ENCODE measurements at regions of chr13 and their contacts with region 1.

Region 1: DNA sequence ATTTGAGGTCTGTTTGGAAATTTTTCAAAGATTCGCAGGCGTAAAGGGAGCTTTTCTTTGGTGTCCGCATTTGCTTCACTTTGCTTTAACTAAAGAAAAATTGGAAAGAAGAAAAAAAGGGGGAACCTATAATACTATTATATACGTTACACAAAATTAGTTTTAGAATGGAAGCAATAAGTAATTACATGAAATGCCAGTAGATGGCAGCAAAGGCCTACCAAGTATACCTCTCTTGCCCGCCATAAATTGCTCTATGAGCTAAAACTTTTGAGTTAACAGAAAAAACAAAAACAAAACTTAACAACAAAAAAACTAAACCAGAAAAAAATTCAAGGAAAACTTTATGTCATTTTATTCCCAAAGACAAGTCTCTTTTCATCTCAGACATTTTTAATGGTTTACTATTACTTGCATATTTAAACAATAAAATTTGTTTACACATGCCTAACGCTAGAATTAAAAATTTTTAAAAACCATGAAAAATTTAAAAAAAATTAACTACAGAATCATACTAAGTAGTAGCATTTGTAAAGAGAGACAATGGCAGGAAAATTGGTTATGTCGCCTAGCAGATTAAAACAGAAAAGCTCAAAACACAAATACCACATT is 271.4 kb downstream of the NALCN start:
- DNase-seq: peak; percentile 5
- ATAC-seq: peak; percentile 80
- H3K4me3 ChIP-seq: no peak overlapping the region
- H3K27ac ChIP-seq: no peak overlapping the region
- H3K4me1 ChIP-seq: no peaks in the 10 kb centered on the region
- H3K27me3 ChIP-seq: no peaks in the 10 kb centered on the region; a peak in 1 of 4 replicates
- CTCF ChIP-seq: peak; percentile 50 to 74 (median 51); a peak in 5 of 6 replicates
- EP300 ChIP-seq: no peak
- POLR2A ChIP-seq: no peak
- RAD21 ChIP-seq: peak; percentile 73

Region 2: GRCh38 chr13:101155920-101156319 is 11.0 kb after region 1 on chr13:
- CTCF ChIA-PET with region 1: interaction called, 27 read pairs
- POLR2A ChIA-PET with region 1: no interaction called
- RAD21 ChIA-PET with region 1: interaction called, 3 read pairs
- SMC1A ChIA-PET with region 1: interaction called, 17 read pairs
- in situ Hi-C with region 1: no loop called
- intact Hi-C with region 1: no loop called
- DNase-seq: no peak
- ATAC-seq: peak; percentile 53; the same call in 2 of the 3 replicates
- H3K4me3 ChIP-seq: no peak overlapping the region
- H3K27ac ChIP-seq: no peak overlapping the region
- H3K4me1 ChIP-seq: no peaks in the 10 kb centered on the region
- H3K27me3 ChIP-seq: 0 out of 4 replicates have a peak, but pooled peaks cover 0 to 2% of the 10 kb centered on the region in 2 experiments
- CTCF ChIP-seq: peak; percentile 25 to 57 (median 54); a peak in 5 of 6 replicates
- EP300 ChIP-seq: no peak
- POLR2A ChIP-seq: no peak
- RAD21 ChIP-seq: no peak

Region 3: DNA sequence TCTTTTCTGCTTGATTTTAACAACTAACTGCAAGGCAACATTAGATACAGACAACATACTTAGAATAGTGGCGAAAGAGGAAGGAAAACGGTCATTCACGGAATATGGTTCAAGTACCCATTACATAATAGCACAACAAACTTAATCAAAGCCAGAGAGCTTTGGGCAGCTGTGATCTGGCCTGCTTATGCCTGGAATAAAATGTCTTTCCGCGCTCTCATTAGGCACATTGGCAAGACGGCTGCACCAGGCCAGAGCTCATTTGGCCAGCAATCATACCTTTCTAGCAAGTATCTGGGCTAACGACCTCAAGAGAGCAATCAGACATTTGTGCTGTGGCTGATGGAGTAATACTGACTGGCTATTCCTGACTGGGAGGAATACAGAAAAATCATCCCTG is 158.6 kb after region 1 on chr13:
- CTCF ChIA-PET with region 1: interaction called, 40 read pairs
- POLR2A ChIA-PET with region 1: no interaction called
- RAD21 ChIA-PET with region 1: interaction called, 32 read pairs
- SMC1A ChIA-PET with region 1: interaction called, 31 read pairs
- in situ Hi-C with region 1: no loop called
- intact Hi-C with region 1: loop called (anchors 5 kb)
- DNase-seq: no peak
- ATAC-seq: no peak
- H3K4me3 ChIP-seq: no peak overlapping the region
- H3K27ac ChIP-seq: no peak overlapping the region
- H3K4me1 ChIP-seq: no peaks in the 10 kb centered on the region
- H3K27me3 ChIP-seq: no peaks in the 10 kb centered on the region
- CTCF ChIP-seq: no peak
- EP300 ChIP-seq: no peak
- POLR2A ChIP-seq: no peak
- RAD21 ChIP-seq: no peak

Region 4: DNA sequence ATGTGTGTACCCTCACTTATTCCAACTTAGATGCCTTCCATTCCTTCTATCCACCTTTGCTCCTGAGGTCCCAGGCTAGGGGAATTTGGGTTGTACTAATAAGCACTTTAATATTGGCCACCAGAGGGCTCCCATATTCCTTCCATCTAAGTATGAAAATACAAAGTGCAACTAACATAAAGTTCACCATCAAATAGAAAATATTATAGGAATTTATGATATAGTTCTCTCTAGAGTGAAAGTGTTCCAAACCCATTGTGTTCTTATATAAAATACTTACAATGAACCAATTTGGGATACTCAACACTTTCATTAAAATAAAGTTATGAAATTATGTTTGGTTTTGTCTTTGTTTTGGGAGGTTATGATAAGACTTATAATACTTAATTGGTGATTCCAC is 369.9 kb after region 1 on chr13:
- CTCF ChIA-PET with region 1: interaction called, 6 read pairs
- POLR2A ChIA-PET with region 1: no interaction called
- RAD21 ChIA-PET with region 1: interaction called, 3 read pairs
- SMC1A ChIA-PET with region 1: interaction called, 4 read pairs
- in situ Hi-C with region 1: no loop called
- intact Hi-C with region 1: loop called (anchors 2 kb)
- DNase-seq: no peak
- ATAC-seq: peak; percentile 86
- H3K4me3 ChIP-seq: no peak overlapping the region
- H3K27ac ChIP-seq: no peak overlapping the region
- H3K4me1 ChIP-seq: no peaks in the 10 kb centered on the region
- H3K27me3 ChIP-seq: no peaks in the 10 kb centered on the region
- CTCF ChIP-seq: peak; percentile 54 to 67 (median 63)
- EP300 ChIP-seq: no peak
- POLR2A ChIP-seq: no peak
- RAD21 ChIP-seq: peak; percentile 73

Region 5: DNA sequence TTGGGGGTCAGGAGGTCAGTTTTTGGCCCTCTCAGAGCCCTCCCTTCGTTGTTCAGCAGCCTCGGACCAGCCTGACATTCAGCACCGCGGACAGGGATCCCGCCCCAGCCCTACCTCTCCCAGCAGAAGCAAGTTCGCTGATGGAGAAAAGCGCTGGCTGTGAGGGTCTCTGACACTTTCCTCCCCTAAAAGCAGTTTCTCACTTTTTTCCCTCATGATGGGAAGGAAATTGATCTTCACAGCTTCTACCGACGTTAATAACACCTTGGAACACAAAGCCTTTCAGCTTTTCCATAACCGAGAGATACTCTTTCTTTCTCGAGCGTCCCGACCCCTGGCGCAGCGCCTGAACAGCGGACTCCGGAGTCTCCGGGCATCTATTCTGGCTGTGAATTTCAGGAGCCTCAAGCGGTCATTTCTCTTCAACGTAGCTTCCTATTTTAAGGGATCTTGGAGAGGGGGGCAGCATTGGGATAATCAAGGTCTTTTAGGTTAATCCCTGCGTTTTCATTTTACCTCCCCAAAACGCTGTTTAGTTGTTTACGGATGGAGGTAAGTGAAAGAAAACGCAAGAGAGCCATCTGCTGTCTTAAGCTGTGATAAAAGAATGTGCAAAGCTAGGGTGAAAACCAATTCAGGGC is 774.7 kb after region 1 on chr13:
- CTCF ChIA-PET with region 1: interaction called, 10 read pairs
- POLR2A ChIA-PET with region 1: no interaction called
- RAD21 ChIA-PET with region 1: no interaction called
- SMC1A ChIA-PET with region 1: no interaction called
- in situ Hi-C with region 1: no loop called
- intact Hi-C with region 1: no loop called
- DNase-seq: no peak
- ATAC-seq: peak; percentile 50
- H3K4me3 ChIP-seq: no peak overlapping the region
- H3K27ac ChIP-seq: no peak overlapping the region
- H3K4me1 ChIP-seq: no peaks in the 10 kb centered on the region
- H3K27me3 ChIP-seq: peaks cover 3 to 11% of the 10 kb centered on the region in 2 experiments
- CTCF ChIP-seq: no peak; a peak in 1 of 6 replicates
- EP300 ChIP-seq: no peak
- POLR2A ChIP-seq: no peak
- RAD21 ChIP-seq: 0 out of 2 replicates have a peak, but pooled peaks have one; percentile 8

Region 6: GRCh38 chr13:102141625-102142472 is 996.9 kb after region 1 on chr13:
- CTCF ChIA-PET with region 1: no interaction called
- POLR2A ChIA-PET with region 1: no interaction called
- RAD21 ChIA-PET with region 1: no interaction called
- SMC1A ChIA-PET with region 1: no interaction called
- in situ Hi-C with region 1: no loop called
- intact Hi-C with region 1: loop called (anchors 10 kb)
- DNase-seq: no peak
- ATAC-seq: peak; percentile 45; the same call in 2 of the 3 replicates
- H3K4me3 ChIP-seq: no peak overlapping the region
- H3K27ac ChIP-seq: no peak overlapping the region
- H3K4me1 ChIP-seq: no peaks in the 10 kb centered on the region
- H3K27me3 ChIP-seq: no peaks in the 10 kb centered on the region
- CTCF ChIP-seq: peak; percentile 52 to 63 (median 55)
- EP300 ChIP-seq: no peak
- POLR2A ChIP-seq: no peak
- RAD21 ChIP-seq: peak; percentile 39

Region 7: DNA sequence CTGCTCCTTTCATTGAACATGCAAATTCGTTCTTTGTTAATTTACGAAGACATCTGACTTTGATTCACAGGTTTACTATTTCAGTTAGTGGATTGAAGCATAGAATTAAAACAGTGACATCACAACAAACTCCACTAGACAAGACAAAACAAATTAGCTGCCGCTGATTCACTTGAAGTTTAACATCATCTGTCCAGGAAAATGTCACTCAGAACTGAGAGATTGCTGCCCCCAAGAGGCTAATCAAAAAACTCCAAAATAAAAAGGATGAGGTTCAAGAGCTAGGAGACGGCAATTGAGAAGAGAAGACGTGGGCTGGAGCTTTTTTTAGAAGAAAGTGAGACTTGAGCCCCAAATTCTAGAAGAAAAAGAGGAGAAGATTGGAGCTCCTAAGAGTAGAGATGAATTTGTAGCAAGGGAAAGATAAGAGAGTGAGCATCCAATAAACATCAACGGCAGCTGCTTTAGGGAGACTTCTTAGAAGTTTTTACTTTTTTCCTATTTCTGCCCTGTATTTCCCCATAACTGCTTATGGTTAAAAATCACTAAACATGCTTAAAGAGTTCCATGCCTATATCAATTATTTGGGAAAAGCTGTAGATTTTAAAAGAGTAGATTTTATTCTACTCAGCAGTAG is 1411.1 kb after region 1 on chr13:
- CTCF ChIA-PET with region 1: interaction called, 8 read pairs
- POLR2A ChIA-PET with region 1: no interaction called
- RAD21 ChIA-PET with region 1: interaction called, 6 read pairs
- SMC1A ChIA-PET with region 1: interaction called, 9 read pairs
- in situ Hi-C with region 1: no loop called
- intact Hi-C with region 1: loop called (anchors 10 kb)
- DNase-seq: no peak
- ATAC-seq: peak; percentile 78
- H3K4me3 ChIP-seq: no peak overlapping the region
- H3K27ac ChIP-seq: no peak overlapping the region
- H3K4me1 ChIP-seq: no peaks in the 10 kb centered on the region
- H3K27me3 ChIP-seq: no peaks in the 10 kb centered on the region
- CTCF ChIP-seq: peak; percentile 34 to 52 (median 39); a peak in 4 of 6 replicates
- EP300 ChIP-seq: no peak
- POLR2A ChIP-seq: no peak
- RAD21 ChIP-seq: peak; percentile 70